Naive thymus-derived CD4-positive, alpha-beta T cell (primary cell): ENCODE measurements at regions of chr18 and their contacts with region 1.

Region 1: GRCh38 chr18:79393635-79394533 is 1.8 kb upstream of the NFATC1 start:
- DNase-seq: peak in 6 of 9 donors; percentile 47 to 67 (median 54)
- ATAC-seq: peak; percentile 45
- H3K4me3 ChIP-seq: peak overlapping the region; percentile 59
- H3K4me3 Mint-ChIP-seq: peak overlapping the region; percentile 81 to 94 (median 91)
- H3K27ac ChIP-seq: peak overlapping the region; percentile 63
- H3K27ac Mint-ChIP-seq: peak overlapping the region; percentile 67 to 91 (median 85)
- H3K4me1 ChIP-seq: peaks cover 14 to 20% of the 10 kb centered on the region in 2 donors
- H3K4me1 Mint-ChIP-seq: peaks cover 15 to 61% (median 48%) of the 10 kb centered on the region in 7 donors
- H3K27me3 ChIP-seq: peaks cover 0 to 6% of the 10 kb centered on the region in 2 donors
- H3K27me3 Mint-ChIP-seq: peaks cover 0 to 39% (median 0%) of the 10 kb centered on the region in 5 donors

Region 2: GRCh38 chr18:79378542-79379250 is 15.2 kb before region 1 on chr18:
- CTCF ChIA-PET with region 1: interaction called, 12 read pairs
- POLR2A ChIA-PET with region 1: interaction called, 3 read pairs
- intact Hi-C with region 1: loop called (anchors 1 kb)
- DNase-seq: peak; percentile 67 to 87 (median 78)
- ATAC-seq: peak; percentile 95
- H3K4me3 ChIP-seq: no peak overlapping the region
- H3K4me3 Mint-ChIP-seq: peak overlapping the region in 2 of 10 donors; percentile 11 to 50
- H3K27ac ChIP-seq: no peak overlapping the region
- H3K27ac Mint-ChIP-seq: peak overlapping the region in 7 of 9 donors; percentile 18 to 77 (median 63)
- H3K4me1 ChIP-seq: peaks cover 6 to 7% of the 10 kb centered on the region in 2 donors
- H3K4me1 Mint-ChIP-seq: peaks cover 4 to 9% (median 9%) of the 10 kb centered on the region in 7 donors
- H3K27me3 ChIP-seq: no peaks in the 10 kb centered on the region
- H3K27me3 Mint-ChIP-seq: no peaks in the 10 kb centered on the region

Region 3: GRCh38 chr18:79528846-79529245 is 135.0 kb after region 1 on chr18:
- CTCF ChIA-PET with region 1: interaction called, 8 read pairs
- POLR2A ChIA-PET with region 1: interaction called, 15 read pairs
- intact Hi-C with region 1: loop called in 1 of 2 experiments (anchors 2 kb)
- DNase-seq: peak; percentile 47 to 88 (median 77)
- ATAC-seq: peak; percentile 65
- H3K4me3 ChIP-seq: no peak overlapping the region
- H3K4me3 Mint-ChIP-seq: peak overlapping the region in 1 of 10 donors; percentile 6
- H3K27ac ChIP-seq: no peak overlapping the region
- H3K27ac Mint-ChIP-seq: peak overlapping the region in 6 of 9 donors; percentile 30 to 85 (median 79)
- H3K4me1 ChIP-seq: peaks cover 8 to 21% of the 10 kb centered on the region in 2 donors
- H3K4me1 Mint-ChIP-seq: peaks cover 7 to 49% (median 33%) of the 10 kb centered on the region in 7 donors
- H3K27me3 ChIP-seq: no peaks in the 10 kb centered on the region
- H3K27me3 Mint-ChIP-seq: no peaks in the 10 kb centered on the region

Region 4: GRCh38 chr18:79964330-79965118 is 570.6 kb after region 1 on chr18 and contains the start of gene HSBP1L1:
- CTCF ChIA-PET with region 1: no interaction called
- POLR2A ChIA-PET with region 1: no interaction called
- intact Hi-C with region 1: loop called in 1 of 2 experiments (anchors 5 kb)
- DNase-seq: peak; percentile 60 to 75 (median 69)
- ATAC-seq: peak; percentile 89
- H3K4me3 ChIP-seq: peak within 1 kb of the TSS; percentile 22
- H3K4me3 Mint-ChIP-seq: peak within 1 kb of the TSS; percentile 81 to 93 (median 90)
- H3K27ac ChIP-seq: peak within 1 kb of the TSS; percentile 89
- H3K27ac Mint-ChIP-seq: peak within 1 kb of the TSS; percentile 88 to 96 (median 94)
- H3K4me1 ChIP-seq: peaks cover 14 to 19% of the 10 kb centered on the region in 2 donors
- H3K4me1 Mint-ChIP-seq: peaks cover 9 to 47% (median 20%) of the 10 kb centered on the region in 7 donors
- H3K27me3 ChIP-seq: no peaks in the 10 kb centered on the region
- H3K27me3 Mint-ChIP-seq: no peaks in the 10 kb centered on the region
- total RNA-seq, gene HSBP1L1: 13.7 to 44.9 (median 41.7) TPM

Region 5: GRCh38 chr18:80023173-80023572 is 629.3 kb after region 1 on chr18:
- CTCF ChIA-PET with region 1: no interaction called
- POLR2A ChIA-PET with region 1: no interaction called
- intact Hi-C with region 1: no loop called
- DNase-seq: no peak
- ATAC-seq: no peak
- H3K4me3 ChIP-seq: no peak overlapping the region
- H3K4me3 Mint-ChIP-seq: no peak overlapping the region
- H3K27ac ChIP-seq: no peak overlapping the region
- H3K27ac Mint-ChIP-seq: peak overlapping the region in 1 of 9 donors; percentile 19
- H3K4me1 ChIP-seq: no peaks in the 10 kb centered on the region
- H3K4me1 Mint-ChIP-seq: no peaks in the 10 kb centered on the region
- H3K27me3 ChIP-seq: no peaks in the 10 kb centered on the region
- H3K27me3 Mint-ChIP-seq: no peaks in the 10 kb centered on the region

Region 6: DNA sequence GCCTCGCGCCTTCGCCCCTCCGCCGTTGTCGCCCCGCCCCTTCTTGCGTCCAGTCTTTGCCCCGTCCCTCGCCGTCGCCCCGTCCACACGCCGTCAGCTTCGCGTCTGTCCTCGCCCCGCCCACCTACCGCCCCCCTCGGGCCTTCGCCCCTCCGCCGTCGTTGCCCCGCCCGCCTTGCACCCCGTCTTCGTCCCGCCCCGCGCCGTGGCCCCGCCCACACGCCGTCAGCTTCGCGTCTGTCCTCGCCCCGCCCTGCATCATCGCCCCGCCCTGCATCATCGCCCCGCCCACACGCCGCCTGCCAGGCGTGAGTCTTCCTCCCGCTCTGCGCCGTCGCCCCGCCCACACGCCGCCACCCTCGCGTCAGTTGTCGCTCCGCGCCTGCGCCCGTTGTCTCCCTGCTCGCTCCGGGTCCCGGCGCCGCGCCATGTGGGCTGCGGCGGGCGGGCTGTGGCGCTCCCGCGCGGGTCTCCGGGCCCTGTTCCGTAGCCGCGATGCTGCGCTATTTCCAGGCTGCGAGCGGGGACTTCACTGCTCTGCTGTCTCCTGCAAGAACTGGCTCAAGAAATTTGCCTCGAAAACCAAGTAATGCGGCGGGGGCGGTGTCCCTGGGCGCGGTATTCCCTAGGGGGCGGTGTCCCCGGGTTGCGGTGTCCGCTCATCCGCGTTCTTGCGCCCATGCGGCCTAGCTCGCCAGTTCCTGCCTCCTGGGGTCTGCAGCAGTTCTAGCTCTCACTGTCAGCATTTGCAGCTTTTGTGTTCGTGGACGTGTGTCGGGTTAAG is 640.4 kb after region 1 on chr18 and contains the start of gene RBFA:
- CTCF ChIA-PET with region 1: no interaction called
- POLR2A ChIA-PET with region 1: no interaction called
- intact Hi-C with region 1: loop called in 1 of 2 experiments (anchors 5 kb)
- DNase-seq: peak; percentile 95 to 100 (median 98)
- ATAC-seq: peak; percentile 88
- H3K4me3 ChIP-seq: peak within 1 kb of the TSS; percentile 83
- H3K4me3 Mint-ChIP-seq: peak within 1 kb of the TSS; percentile 84 to 95 (median 91)
- H3K27ac ChIP-seq: peak within 1 kb of the TSS; percentile 87
- H3K27ac Mint-ChIP-seq: peak within 1 kb of the TSS; percentile 86 to 99 (median 96)
- H3K4me1 ChIP-seq: peaks cover 8 to 14% of the 10 kb centered on the region in 2 donors
- H3K4me1 Mint-ChIP-seq: peaks cover 22 to 36% (median 29%) of the 10 kb centered on the region in 7 donors
- H3K27me3 ChIP-seq: no peaks in the 10 kb centered on the region
- H3K27me3 Mint-ChIP-seq: no peaks in the 10 kb centered on the region
- total RNA-seq, gene RBFA: 17.6 to 23.5 (median 21.7) TPM

Region 7: GRCh38 chr18:80247403-80247916 is 853.6 kb after region 1 on chr18 and contains the start of gene PARD6G:
- CTCF ChIA-PET with region 1: no interaction called
- POLR2A ChIA-PET with region 1: no interaction called
- intact Hi-C with region 1: no loop called
- DNase-seq: peak in 5 of 9 donors; percentile 9 to 55 (median 17)
- ATAC-seq: peak; percentile 91
- H3K4me3 ChIP-seq: no peak within 1 kb of the TSS
- H3K4me3 Mint-ChIP-seq: peak within 1 kb of the TSS; percentile 32 to 85 (median 64)
- H3K27ac ChIP-seq: no peak within 1 kb of the TSS
- H3K27ac Mint-ChIP-seq: no peak within 1 kb of the TSS
- H3K4me1 ChIP-seq: no peaks in the 10 kb centered on the region
- H3K4me1 Mint-ChIP-seq: peaks cover 0 to 15% (median 5%) of the 10 kb centered on the region in 7 donors
- H3K27me3 ChIP-seq: no peaks in the 10 kb centered on the region
- H3K27me3 Mint-ChIP-seq: peaks cover 17 to 55% (median 41%) of the 10 kb centered on the region in 5 donors
- total RNA-seq, gene PARD6G: 0.07 to 0.16 (median 0.09) TPM in 4 of 5 experiments, not detected in the other